Activated CD4-positive, alpha-beta T cell treated with anti-CD3 and anti-CD28 coated beads, Interleukin-2, amount 10 ng/mL, durations not matched to agents 24 days and 14 days (primary cell): ENCODE measurements at regions of chr7 and their contacts with region 1.

Region 1: GRCh38 chr7:108235451-108236061 is 105.4 kb upstream of the LAMB4 start:
- DNase-seq: no peak
- H3K4me3 Mint-ChIP-seq: no peak overlapping the region
- H3K27ac Mint-ChIP-seq: no peak overlapping the region
- H3K4me1 Mint-ChIP-seq: peaks cover 3% of the 10 kb centered on the region
- H3K27me3 Mint-ChIP-seq: peaks cover 2% of the 10 kb centered on the region

Region 2: DNA sequence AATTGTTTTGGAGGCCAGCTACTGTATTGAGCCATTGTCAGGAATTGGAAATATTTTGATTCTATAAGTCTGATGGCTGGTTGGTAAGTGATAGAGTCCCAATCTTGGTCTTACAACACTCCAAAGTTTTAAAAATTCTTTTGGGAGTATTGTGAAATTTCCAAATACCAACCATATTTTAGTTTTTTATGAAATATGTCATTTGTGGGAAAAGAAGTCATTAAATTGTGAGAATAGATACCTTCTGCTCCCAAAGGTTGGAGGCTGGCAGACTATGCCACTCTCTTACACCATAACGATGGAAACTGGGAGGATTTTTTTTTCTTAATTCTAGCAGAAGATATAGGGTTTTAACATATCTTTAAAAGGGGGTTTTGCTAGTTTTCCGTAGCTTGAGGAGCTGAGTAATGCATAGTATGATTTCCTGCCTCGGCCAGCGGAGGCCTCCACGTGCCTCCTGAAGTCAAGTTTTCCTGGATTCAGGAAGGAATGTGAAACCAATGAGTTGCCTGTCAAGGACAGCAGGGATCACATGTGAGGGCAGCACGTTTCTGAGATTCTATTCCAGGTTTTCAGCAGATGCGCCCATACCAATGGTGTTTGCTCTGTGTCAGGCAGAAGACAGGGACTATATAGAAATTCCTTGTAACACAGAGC is 13.2 kb before region 1 on chr7:
- intact Hi-C with region 1: loop called (anchors 1 kb)
- DNase-seq: no peak
- H3K4me3 Mint-ChIP-seq: no peak overlapping the region
- H3K27ac Mint-ChIP-seq: no peak overlapping the region
- H3K4me1 Mint-ChIP-seq: no peaks in the 10 kb centered on the region
- H3K27me3 Mint-ChIP-seq: no peaks in the 10 kb centered on the region